Posterior cingulate gyrus (tissue), 11 donors: ENCODE measurements at regions of chr7 and their contacts with region 1.

Region 1: DNA sequence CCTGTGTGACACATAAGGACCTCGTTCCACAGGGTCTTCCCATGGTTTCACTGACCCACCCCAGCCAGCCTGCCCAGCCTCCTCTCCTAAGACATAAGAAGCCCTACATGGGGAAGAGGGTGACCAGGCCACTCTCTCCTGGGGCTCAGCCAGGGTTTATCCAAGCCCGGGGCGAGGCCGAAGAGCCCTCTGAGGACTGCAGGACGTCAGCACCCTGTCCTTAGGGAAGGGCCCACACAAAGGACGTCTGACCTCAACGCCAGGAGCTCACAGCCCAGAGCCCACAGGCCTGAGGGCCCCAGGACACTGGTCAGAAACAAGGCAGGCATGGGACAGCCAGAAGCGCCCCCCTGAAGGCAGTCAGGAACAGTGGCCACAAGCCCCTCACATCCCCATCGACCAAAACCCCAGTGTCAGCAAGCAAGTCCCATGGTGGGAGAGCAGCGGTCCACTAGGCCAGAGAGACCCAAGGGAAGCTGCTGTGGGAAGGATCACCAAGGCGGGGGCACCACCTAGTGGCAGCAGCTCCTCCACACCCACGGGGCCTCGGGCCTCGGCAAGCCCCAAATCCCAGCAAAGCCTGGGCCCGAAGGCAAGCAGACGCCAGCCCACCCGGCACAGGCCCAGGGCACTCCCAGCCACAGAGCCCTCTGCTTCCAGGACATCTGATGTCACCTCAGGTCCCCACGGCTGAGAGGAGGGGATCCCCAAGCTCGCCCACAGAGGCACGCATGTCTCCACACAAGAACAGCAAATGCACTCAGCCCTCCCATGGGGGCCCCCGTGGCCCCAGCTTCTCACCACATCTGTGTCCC is 23.4 kb downstream of the MAD1L1 start:
- DNase-seq: peak; percentile 68 to 98 (median 86)

Region 2: GRCh38 chr7:1579481-1580421 is 629.6 kb before region 1 on chr7:
- intact Hi-C with region 1: loop called (anchors 1 kb)
- DNase-seq: peak; percentile 62 to 96 (median 80)

Region 3: DNA sequence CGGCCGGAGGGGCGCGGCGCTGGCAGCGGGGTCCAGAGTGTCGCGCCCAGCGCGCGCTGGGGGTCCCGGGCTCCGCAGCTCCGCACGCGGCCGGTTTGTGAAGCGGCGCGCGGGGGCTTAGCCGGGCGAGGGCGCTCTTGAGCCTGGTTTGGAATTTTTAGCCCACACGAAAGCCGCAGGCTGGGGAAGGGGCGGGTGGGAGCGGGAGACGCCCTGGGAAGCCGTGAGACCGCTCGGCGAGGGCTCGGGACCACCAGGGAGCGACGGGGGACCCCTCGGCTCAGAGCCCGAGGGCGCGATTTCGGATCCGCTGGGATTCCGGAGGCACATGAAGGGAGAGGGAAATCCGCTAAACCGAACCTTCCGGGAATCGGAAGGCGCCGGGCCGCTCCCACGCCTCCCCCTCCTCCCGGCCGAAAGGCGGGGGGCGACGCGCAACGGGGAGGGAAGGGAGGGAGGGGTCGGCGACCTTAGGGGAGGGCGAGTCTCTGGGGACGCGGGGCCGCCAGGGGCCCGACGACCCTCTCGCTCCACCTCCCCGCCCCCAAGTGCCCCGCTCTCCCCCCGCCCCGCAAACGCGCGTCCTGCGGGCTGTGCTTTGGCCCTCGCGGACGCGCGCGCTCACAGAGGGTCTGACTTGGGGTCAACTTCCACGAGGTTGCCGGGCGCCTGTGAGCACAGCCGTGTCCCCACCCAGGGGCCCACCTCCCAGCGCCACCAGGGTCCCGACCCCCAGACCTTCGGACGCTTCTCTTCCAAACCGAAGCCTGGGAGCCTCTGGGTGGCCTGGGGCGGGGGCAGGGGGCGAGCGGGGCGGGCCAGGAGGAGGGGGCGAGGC is 544.4 kb before region 1 on chr7:
- intact Hi-C with region 1: loop called (anchors 2 kb)
- DNase-seq: peak in 9 of 10 donors; percentile 42 to 94 (median 71)